ENCODE measurements at regions of chr11 and their contacts with region 1.

Region 1: GRCh38 chr11:78798660-78799059 is 224.0 kb upstream of the NARS2 start:
- DNase-seq: peak; percentile 28
- ATAC-seq: peak; percentile 99
- H3K4me3 ChIP-seq: no peak overlapping the region
- H3K27ac ChIP-seq: no peak overlapping the region
- H3K4me1 ChIP-seq: no peaks in the 10 kb centered on the region
- H3K27me3 ChIP-seq: peaks cover 34% of the 10 kb centered on the region
- CTCF ChIP-seq: peak; percentile 68 to 92 (median 89)
- POLR2A ChIP-seq: no peak
- RAD21 ChIP-seq: peak; percentile 59

Region 2: DNA sequence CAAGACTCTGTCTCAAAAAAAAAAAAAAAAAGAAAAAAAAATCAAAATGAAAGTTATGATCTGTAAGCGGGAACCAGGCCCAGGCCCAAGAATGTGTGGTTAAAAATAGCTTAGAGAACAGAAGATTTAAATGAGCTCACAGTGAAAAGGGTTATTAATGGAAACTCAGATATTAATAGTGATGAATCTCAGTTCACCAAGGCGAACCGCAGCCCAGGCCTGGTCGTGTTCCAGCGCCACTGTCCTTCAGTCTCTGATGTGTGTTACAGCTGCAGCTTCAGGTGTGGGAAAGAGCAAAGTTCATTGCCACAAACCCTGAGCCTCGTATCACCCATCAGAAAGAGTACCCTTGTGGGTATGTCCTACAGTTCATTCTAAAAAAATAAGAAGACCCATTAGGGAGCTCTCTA is 488.2 kb before region 1 on chr11:
- CTCF ChIA-PET with region 1: no interaction called
- POLR2A ChIA-PET with region 1: no interaction called
- RAD21 ChIA-PET with region 1: no interaction called
- intact Hi-C with region 1: no loop called
- DNase-seq: no peak
- ATAC-seq: no peak
- H3K4me3 ChIP-seq: no peak overlapping the region
- H3K27ac ChIP-seq: no peak overlapping the region
- H3K4me1 ChIP-seq: peaks cover 0 to 5% of the 10 kb centered on the region in 2 experiments; a peak in 1 of 4 replicates
- H3K27me3 ChIP-seq: no peaks in the 10 kb centered on the region
- CTCF ChIP-seq: no peak
- POLR2A ChIP-seq: no peak
- RAD21 ChIP-seq: no peak

Region 3: DNA sequence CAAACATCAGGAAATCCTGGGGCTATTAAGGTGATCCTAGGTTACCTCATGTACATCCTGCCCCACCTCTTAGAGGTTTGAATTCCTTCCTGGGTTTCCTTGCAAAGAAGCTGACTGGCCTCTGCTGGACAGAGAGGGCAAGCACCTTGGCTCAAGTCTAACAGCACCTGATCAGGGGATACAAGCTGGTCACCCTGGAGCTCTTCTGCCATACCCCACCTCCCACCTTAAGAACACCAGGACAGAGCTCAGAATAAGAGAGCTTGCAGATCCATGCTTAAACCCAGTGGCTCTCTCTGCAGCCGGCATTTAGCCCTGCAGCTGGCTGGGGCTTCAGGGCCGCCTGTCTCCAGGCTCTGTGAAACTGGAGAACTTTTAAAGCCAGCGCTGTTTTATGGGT is 162.6 kb after region 1 on chr11:
- CTCF ChIA-PET with region 1: interaction called, 11 read pairs
- POLR2A ChIA-PET with region 1: no interaction called
- RAD21 ChIA-PET with region 1: no interaction called
- intact Hi-C with region 1: loop called (anchors 1 kb)
- DNase-seq: peak; percentile 15
- ATAC-seq: peak; percentile 84
- H3K4me3 ChIP-seq: no peak overlapping the region
- H3K27ac ChIP-seq: no peak overlapping the region
- H3K4me1 ChIP-seq: no peaks in the 10 kb centered on the region
- H3K27me3 ChIP-seq: peaks cover 4% of the 10 kb centered on the region
- CTCF ChIP-seq: peak; percentile 40 to 47 (median 45); a peak in 5 of 6 replicates
- POLR2A ChIP-seq: no peak
- RAD21 ChIP-seq: peak; percentile 55

Measured in HCT116 (cell line).